Heart left ventricle (tissue), 16 donors: ENCODE measurements at regions of chr22 and their contacts with region 1.

Region 1: DNA sequence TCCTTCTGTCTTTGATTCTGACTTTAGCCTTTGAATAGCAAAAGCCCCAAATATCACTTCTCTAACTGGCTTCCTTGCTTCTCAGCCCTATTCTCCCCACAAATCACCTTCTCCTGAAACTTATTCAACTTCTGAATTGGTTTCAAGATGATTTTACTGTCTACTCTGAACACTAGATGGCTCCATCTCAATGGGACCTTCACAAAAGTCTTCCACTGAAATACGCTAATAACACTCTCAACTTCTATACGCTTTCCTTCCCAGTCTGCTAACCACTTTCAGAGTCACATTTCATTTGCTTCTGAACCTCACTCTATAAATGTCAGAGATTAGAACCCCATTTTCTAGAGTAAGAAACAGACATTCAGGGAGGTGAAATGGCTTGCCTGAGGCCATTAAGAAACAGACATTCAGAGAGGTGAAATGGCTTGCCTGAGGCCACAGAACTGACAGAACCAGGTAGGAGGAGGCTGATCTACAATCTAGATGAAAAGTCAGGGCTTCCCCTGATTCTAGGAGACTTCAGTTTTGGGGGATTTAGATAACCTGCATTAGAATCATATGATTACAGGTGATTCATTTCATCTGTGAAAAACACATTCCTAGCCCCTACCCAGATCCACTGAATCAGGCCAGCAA is 20.6 kb downstream of the MORC2 start:
- DNase-seq: no peak
- ATAC-seq: peak; percentile 43 to 78 (median 65)
- H3K4me3 ChIP-seq: no peak overlapping the region
- H3K27ac ChIP-seq: peak overlapping the region in 10 of 12 donors; percentile 30 to 76 (median 54)
- H3K4me1 ChIP-seq: peaks cover 0 to 34% (median 24%) of the 10 kb centered on the region in 12 donors
- H3K27me3 ChIP-seq: no peaks in the 10 kb centered on the region
- CTCF ChIP-seq: peak; percentile 47 to 80 (median 66)
- POLR2A ChIP-seq: no peak

Region 2: DNA sequence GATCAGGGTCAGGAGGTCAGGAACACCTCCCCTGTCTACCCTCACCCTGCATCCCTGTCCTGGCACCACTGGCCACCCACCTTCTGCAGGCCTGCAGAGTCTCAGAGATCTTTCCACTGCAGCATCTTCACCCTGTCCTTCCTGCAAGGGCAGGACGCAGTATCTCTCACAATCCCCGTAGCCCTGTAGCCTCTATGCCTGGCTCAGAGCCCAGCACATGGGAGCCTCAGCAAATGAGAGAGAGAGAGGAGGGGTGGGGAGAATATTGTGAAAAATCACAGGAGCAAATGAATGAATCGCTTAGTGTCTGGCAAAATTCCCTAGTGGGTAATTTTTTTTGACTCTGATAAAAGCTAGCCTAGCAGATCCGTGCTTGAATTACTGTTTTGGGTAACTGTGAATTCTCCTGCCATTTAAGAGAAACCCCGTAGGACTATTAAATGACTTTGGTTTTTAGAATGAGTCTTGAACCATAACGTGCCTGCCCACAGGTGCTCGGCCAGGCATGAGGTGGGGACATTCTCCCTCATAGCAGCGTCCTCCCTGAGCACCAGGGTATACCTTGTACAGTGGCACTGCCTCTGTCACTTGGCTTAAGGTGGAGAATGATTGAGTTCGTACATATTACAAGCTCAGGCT is 70.9 kb before region 1 on chr22:
- intact Hi-C with region 1: no loop called
- DNase-seq: peak; percentile 41 to 75 (median 44)
- ATAC-seq: peak; percentile 35 to 47 (median 39)
- H3K4me3 ChIP-seq: no peak overlapping the region
- H3K27ac ChIP-seq: peak overlapping the region in 6 of 12 donors; percentile 42 to 78 (median 64)
- H3K4me1 ChIP-seq: peaks cover 0 to 57% (median 33%) of the 10 kb centered on the region in 12 donors
- H3K27me3 ChIP-seq: no peaks in the 10 kb centered on the region
- CTCF ChIP-seq: no peak
- POLR2A ChIP-seq: no peak

Region 3: GRCh38 chr22:30902496-30903357 is 45.2 kb before region 1 on chr22:
- intact Hi-C with region 1: no loop called
- DNase-seq: no peak
- ATAC-seq: no peak
- H3K4me3 ChIP-seq: no peak overlapping the region
- H3K27ac ChIP-seq: no peak overlapping the region
- H3K4me1 ChIP-seq: no peaks in the 10 kb centered on the region
- H3K27me3 ChIP-seq: no peaks in the 10 kb centered on the region
- CTCF ChIP-seq: no peak
- POLR2A ChIP-seq: no peak

Region 4: DNA sequence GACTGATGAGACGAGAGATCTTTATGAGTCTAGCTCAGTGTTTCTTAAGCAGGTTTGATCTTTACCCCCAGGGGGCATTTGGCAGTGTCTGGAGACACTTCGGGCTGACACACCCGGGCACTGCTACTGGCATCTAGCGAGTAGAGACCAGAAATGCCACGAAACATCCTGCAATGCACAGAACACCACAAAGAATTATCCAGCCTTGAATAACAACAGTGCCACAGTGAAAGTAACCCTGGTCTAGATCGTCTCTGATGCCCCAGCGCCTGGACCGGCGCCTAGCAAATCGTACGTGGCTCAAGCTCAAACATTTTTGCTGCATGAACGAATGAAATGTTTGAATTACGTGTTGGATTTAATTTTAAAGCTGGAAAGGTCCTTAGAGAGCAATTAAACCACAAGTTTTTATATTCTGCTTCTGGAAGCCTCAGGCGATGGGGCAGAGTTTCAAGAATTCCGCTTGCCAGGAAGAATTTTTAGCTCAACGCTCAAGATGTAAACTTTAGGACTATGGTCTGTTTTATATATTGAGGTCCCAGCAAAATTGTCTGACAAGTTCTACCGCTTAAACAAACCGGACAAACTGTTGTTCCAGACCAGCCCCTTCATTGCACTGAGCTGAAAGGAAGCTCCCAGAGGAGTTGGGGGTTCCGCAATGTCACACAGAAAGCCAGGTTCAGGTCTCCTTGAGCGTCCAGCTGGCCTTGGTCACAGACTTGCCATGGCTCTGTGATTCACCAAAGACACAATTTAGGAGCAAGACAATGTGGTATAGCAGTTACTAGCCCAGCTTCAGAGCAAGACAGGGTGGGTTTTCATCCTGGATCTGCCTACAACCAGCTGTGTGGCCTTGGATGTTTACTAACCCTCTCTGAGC is 89.0 kb after region 1 on chr22:
- intact Hi-C with region 1: loop called in 1 of 10 experiments (anchors 5 kb)
- DNase-seq: peak in 1 of 5 donors; percentile 33
- ATAC-seq: no peak
- H3K4me3 ChIP-seq: peak overlapping the region in 6 of 12 donors; percentile 8 to 30 (median 22)
- H3K27ac ChIP-seq: peak overlapping the region in 9 of 12 donors; percentile 18 to 87 (median 34)
- H3K4me1 ChIP-seq: peaks cover 0 to 38% (median 13%) of the 10 kb centered on the region in 12 donors
- H3K27me3 ChIP-seq: no peaks in the 10 kb centered on the region
- CTCF ChIP-seq: no peak
- POLR2A ChIP-seq: no peak

Region 5: GRCh38 chr22:31089160-31090100 is 141.5 kb after region 1 on chr22:
- intact Hi-C with region 1: loop called (anchors 1 to 2 kb)
- DNase-seq: peak in 3 of 5 donors; percentile 52 to 66 (median 58)
- ATAC-seq: peak in 2 of 4 donors; percentile 13 to 21
- H3K4me3 ChIP-seq: no peak overlapping the region
- H3K27ac ChIP-seq: peak overlapping the region in 9 of 12 donors; percentile 2 to 99 (median 43)
- H3K4me1 ChIP-seq: peaks cover 0 to 85% (median 21%) of the 10 kb centered on the region in 12 donors
- H3K27me3 ChIP-seq: no peaks in the 10 kb centered on the region
- CTCF ChIP-seq: peak; percentile 66 to 87 (median 76)
- POLR2A ChIP-seq: no peak

Region 6: DNA sequence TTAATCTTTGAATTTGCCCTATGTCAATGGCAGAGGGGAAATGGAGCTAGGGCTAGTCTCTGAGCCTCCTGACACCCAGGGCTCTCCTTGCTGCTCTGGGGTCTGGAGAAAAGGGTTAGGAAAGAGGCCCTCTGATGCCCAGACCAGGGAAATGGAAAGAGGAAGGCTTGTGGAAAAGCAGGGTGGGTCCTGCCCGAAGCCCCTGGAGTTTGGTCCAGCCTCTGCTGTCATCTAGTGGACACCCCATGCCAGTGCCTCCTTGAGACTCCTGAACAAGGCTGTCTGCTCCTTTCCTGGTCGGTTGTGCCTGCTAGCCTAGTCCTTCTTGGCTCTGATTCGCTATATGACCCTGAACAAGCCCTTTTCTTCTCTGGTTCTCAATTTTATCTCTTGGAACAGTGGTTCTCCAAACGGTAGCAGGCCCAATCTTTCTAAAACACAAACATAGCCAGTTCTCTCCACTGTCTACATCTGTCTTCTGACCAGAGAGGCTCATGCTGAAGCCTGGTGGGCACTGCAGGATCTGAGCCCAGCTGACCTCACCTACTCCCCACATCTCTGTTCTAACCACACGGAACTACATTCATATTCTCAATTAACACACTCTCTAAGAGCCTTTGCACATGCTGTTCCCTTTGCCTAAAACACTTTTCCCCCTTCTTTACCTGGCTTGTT is 201.2 kb after region 1 on chr22:
- intact Hi-C with region 1: loop called (anchors 1 to 5 kb)
- DNase-seq: peak; percentile 74 to 79 (median 76)
- ATAC-seq: peak; percentile 91 to 97 (median 96)
- H3K4me3 ChIP-seq: no peak overlapping the region
- H3K27ac ChIP-seq: peak overlapping the region; percentile 37 to 85 (median 74)
- H3K4me1 ChIP-seq: peaks cover 0 to 14% (median 10%) of the 10 kb centered on the region in 12 donors
- H3K27me3 ChIP-seq: no peaks in the 10 kb centered on the region
- CTCF ChIP-seq: peak; percentile 81 to 98 (median 94)
- POLR2A ChIP-seq: no peak